Activated T-helper 2 cell treated with anti-CD3 and anti-CD28 coated beads, Interferon-gamma antibody, Interleukin-2, Interleukin-4, amounts not matched to agents 10 μg/mL and 5 μg/mL and 100 μg/mL, durations not matched to agents 14 hours and 24 hours and 36 hours (primary cell): ENCODE measurements at regions of chr1 and their contacts with region 1.

Region 1: DNA sequence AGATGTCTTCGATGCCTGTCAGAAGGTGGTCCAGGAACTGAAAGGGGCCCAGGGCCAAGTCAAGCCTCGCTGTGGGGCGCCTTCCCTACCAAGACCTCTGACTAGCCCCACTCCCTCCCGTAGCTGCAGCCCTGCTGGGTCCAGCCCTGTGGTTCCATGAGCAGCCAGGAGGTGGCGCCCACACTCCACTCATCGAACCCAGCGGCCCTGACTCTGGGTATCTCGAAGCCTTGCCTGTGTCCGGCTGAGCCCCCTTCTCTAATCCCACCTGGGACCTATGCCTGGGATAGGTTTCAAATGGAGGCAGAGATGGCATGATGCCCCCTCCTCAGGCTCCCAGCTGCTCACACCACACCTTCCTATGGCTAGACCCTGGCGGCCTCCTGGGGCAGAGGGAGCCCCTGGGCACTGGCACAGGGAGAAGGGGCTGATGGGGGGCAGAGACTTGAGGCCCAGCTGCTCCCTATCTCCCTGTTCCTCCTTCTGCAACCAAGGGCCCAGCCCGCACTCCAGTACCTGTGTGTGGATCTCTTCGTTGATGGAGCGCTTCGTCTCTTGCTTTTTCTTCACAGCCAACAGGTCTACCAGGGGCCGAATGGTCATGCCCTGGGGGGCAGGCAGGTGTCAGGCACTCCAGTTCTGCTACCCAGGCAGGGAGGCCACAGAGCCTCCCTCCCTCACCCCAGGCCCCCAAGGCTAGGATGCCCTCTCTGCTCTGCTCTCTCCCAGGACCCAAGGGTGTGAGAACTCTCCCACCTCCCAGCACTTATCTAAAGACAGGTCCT is 52.0 kb downstream of the SLC9A1 start:
- DNase-seq: peak; percentile 70
- H3K4me3 Mint-ChIP-seq: no peak overlapping the region
- H3K27ac Mint-ChIP-seq: no peak overlapping the region
- H3K4me1 Mint-ChIP-seq: peaks cover 7% of the 10 kb centered on the region
- H3K27me3 Mint-ChIP-seq: no peaks in the 10 kb centered on the region

Region 2: GRCh38 chr1:27201295-27201694 is 98.4 kb after region 1 on chr1:
- intact Hi-C with region 1: loop called (anchors 1 kb)
- DNase-seq: no peak
- H3K4me3 Mint-ChIP-seq: no peak overlapping the region
- H3K27ac Mint-ChIP-seq: no peak overlapping the region
- H3K4me1 Mint-ChIP-seq: peaks cover 2% of the 10 kb centered on the region
- H3K27me3 Mint-ChIP-seq: peaks cover 3% of the 10 kb centered on the region